Aorta (tissue), 5 donors: ENCODE measurements at regions of chr7 and their contacts with region 1.

Region 1: GRCh38 chr7:158001621-158002320 is 585.9 kb downstream of the PTPRN2 start:
- DNase-seq: no peak
- ATAC-seq: no peak
- H3K4me3 ChIP-seq: no peak overlapping the region
- H3K27ac ChIP-seq: no peak overlapping the region
- H3K4me1 ChIP-seq: no peaks in the 10 kb centered on the region
- H3K27me3 ChIP-seq: no peaks in the 10 kb centered on the region

Region 2: GRCh38 chr7:157961731-157962457 is 39.9 kb before region 1 on chr7:
- intact Hi-C with region 1: no loop called
- DNase-seq: no peak
- ATAC-seq: no peak
- H3K4me3 ChIP-seq: no peak overlapping the region
- H3K27ac ChIP-seq: no peak overlapping the region
- H3K4me1 ChIP-seq: no peaks in the 10 kb centered on the region
- H3K27me3 ChIP-seq: no peaks in the 10 kb centered on the region

Region 3: GRCh38 chr7:158061026-158061630 is 59.4 kb after region 1 on chr7:
- intact Hi-C with region 1: loop called in 1 of 2 experiments (anchors 10 kb)
- DNase-seq: no peak
- ATAC-seq: no peak
- H3K4me3 ChIP-seq: no peak overlapping the region
- H3K27ac ChIP-seq: no peak overlapping the region
- H3K4me1 ChIP-seq: no peaks in the 10 kb centered on the region
- H3K27me3 ChIP-seq: no peaks in the 10 kb centered on the region